ENCODE measurements at regions of chr1 and their contacts with region 1.

Region 1: GRCh38 chr1:182054698-182055326 is 6.7 kb downstream of the ZNF648 start:
- DNase-seq: peak; percentile 79
- ATAC-seq: peak; percentile 72
- H3K4me3 Mint-ChIP-seq: no peak overlapping the region
- H3K27ac Mint-ChIP-seq: no peak overlapping the region
- H3K4me1 Mint-ChIP-seq: peaks cover 26% of the 10 kb centered on the region
- H3K27me3 Mint-ChIP-seq: peaks cover 26% of the 10 kb centered on the region

Region 2: DNA sequence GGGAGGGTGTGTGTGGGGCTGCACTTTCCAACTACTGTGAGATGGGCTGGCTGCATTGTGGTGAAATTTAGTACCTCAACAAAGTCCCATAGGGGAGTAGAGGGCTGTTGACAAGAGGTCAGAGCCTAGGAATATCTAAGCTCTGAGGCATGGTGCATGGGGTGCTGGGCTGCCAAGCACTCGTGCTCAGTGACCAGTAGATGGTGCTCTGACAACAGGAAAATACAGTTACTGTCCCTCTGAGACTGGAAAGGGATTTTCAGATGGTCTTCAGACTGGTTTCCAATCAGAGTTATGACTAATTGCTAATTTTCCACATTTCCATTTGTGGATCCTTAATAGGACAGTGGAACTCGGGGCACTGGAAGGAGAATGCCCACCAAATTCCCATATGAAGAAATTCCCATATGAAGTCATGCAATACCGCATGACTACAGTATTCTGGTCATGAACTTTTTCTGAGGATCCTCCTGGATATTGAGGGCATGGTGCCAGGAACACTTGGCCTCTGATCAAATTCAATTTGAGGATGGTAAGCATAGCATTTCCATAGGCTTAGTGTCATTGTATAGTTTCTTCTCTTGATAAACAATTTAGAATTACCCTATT is 575.6 kb before region 1 on chr1:
- CTCF ChIA-PET with region 1: interaction called, 50 read pairs
- POLR2A ChIA-PET with region 1: no interaction called
- DNase-seq: peak; percentile 42
- ATAC-seq: peak; percentile 66
- H3K4me3 Mint-ChIP-seq: no peak overlapping the region
- H3K27ac Mint-ChIP-seq: no peak overlapping the region
- H3K4me1 Mint-ChIP-seq: peaks cover 9% of the 10 kb centered on the region
- H3K27me3 Mint-ChIP-seq: peaks cover 48% of the 10 kb centered on the region

Region 3: GRCh38 chr1:181936768-181937581 is 117.8 kb before region 1 on chr1:
- CTCF ChIA-PET with region 1: interaction called, 21 read pairs
- POLR2A ChIA-PET with region 1: no interaction called
- DNase-seq: peak; percentile 66
- ATAC-seq: peak; percentile 76
- H3K4me3 Mint-ChIP-seq: no peak overlapping the region
- H3K27ac Mint-ChIP-seq: no peak overlapping the region
- H3K4me1 Mint-ChIP-seq: no peaks in the 10 kb centered on the region
- H3K27me3 Mint-ChIP-seq: no peaks in the 10 kb centered on the region

Region 4: GRCh38 chr1:182029379-182030331 is 25.2 kb before region 1 on chr1:
- CTCF ChIA-PET with region 1: interaction called, 22 read pairs
- POLR2A ChIA-PET with region 1: interaction called, 4 read pairs
- DNase-seq: peak; percentile 99
- ATAC-seq: peak; percentile 96
- H3K4me3 Mint-ChIP-seq: peak overlapping the region; percentile 91
- H3K27ac Mint-ChIP-seq: peak overlapping the region; percentile 96
- H3K4me1 Mint-ChIP-seq: peaks cover 15% of the 10 kb centered on the region
- H3K27me3 Mint-ChIP-seq: peaks cover 10% of the 10 kb centered on the region

Region 5: DNA sequence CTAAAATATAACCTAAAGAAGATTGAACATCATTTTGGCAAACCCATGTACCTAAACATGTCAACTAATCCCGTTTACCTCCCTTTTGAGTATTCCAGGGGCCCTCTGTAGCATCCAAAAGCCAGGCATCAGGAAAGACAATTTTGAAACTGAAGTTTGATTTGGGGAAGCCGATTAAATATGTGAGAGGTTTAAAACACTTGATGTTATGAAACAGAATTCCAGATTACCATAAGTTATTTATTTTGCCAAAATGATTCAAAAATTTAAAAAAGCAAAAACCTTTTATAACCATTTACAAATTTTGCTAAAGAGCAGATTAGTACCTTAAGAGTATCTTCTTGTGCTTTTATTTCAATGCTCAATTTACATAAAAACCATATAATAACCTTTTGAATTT is 16.6 kb before region 1 on chr1:
- CTCF ChIA-PET with region 1: interaction called, 14 read pairs
- POLR2A ChIA-PET with region 1: no interaction called
- DNase-seq: no peak
- ATAC-seq: no peak
- H3K4me3 Mint-ChIP-seq: no peak overlapping the region
- H3K27ac Mint-ChIP-seq: no peak overlapping the region
- H3K4me1 Mint-ChIP-seq: peaks cover 22% of the 10 kb centered on the region
- H3K27me3 Mint-ChIP-seq: peaks cover 5% of the 10 kb centered on the region

Region 6: GRCh38 chr1:182069028-182069466 is 14.2 kb after region 1 on chr1:
- CTCF ChIA-PET with region 1: interaction called, 10 read pairs
- POLR2A ChIA-PET with region 1: no interaction called
- DNase-seq: peak; percentile 42
- ATAC-seq: peak; percentile 65
- H3K4me3 Mint-ChIP-seq: no peak overlapping the region
- H3K27ac Mint-ChIP-seq: no peak overlapping the region
- H3K4me1 Mint-ChIP-seq: peaks cover 2% of the 10 kb centered on the region
- H3K27me3 Mint-ChIP-seq: peaks cover 12% of the 10 kb centered on the region

Region 7: DNA sequence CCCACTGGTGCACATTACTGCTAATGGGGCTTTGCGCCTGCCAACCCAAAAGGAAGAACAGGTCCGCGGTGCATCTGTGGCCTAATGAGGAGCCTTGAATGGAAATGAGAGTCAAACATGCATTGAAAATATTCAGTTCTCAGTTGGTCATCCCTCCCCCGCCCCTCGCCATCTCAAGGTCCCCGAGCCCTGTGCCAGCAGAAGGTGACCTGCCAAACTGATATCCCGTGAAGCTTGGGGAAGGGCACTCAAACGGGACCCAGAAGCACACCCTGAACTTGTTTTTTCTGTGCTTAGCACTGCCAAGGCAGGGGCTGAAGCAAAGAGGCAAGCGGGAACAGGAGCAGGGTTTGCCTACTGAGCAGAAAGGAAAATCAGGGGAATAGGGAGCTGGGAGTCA is 74.6 kb after region 1 on chr1:
- CTCF ChIA-PET with region 1: no interaction called
- POLR2A ChIA-PET with region 1: no interaction called
- DNase-seq: no peak
- ATAC-seq: no peak
- H3K4me3 Mint-ChIP-seq: no peak overlapping the region
- H3K27ac Mint-ChIP-seq: no peak overlapping the region
- H3K4me1 Mint-ChIP-seq: no peaks in the 10 kb centered on the region
- H3K27me3 Mint-ChIP-seq: peaks cover 5% of the 10 kb centered on the region